ENCODE measurements at regions of chr2 and their contacts with region 1.

Region 1: GRCh38 chr2:102826904-102827303 is 65.1 kb downstream of the TMEM182 start:
- DNase-seq: no peak
- ATAC-seq: no peak
- H3K4me3 Mint-ChIP-seq: no peak overlapping the region
- H3K27ac Mint-ChIP-seq: no peak overlapping the region
- H3K4me1 Mint-ChIP-seq: no peaks in the 10 kb centered on the region
- H3K27me3 Mint-ChIP-seq: no peaks in the 10 kb centered on the region

Region 2: GRCh38 chr2:102841107-102841840 is 14.4 kb after region 1 on chr2:
- CTCF ChIA-PET with region 1: interaction called, 12 read pairs
- POLR2A ChIA-PET with region 1: no interaction called
- DNase-seq: peak; percentile 58
- ATAC-seq: no peak
- H3K4me3 Mint-ChIP-seq: no peak overlapping the region
- H3K27ac Mint-ChIP-seq: no peak overlapping the region
- H3K4me1 Mint-ChIP-seq: no peaks in the 10 kb centered on the region
- H3K27me3 Mint-ChIP-seq: no peaks in the 10 kb centered on the region